Activated CD8-positive, alpha-beta memory T cell treated with anti-CD3 and anti-CD28 coated beads, Interleukin-2, amount 10 ng/mL, durations not matched to agents 7 days and 5 days (primary cell): ENCODE measurements at regions of chr1 and their contacts with region 1.

Region 1: GRCh38 chr1:181424786-181425403 is 58.4 kb upstream of the CACNA1E start:
- DNase-seq: peak; percentile 80
- ATAC-seq: peak; percentile 68
- H3K4me3 Mint-ChIP-seq: peak overlapping the region; percentile 44
- H3K27ac Mint-ChIP-seq: no peak overlapping the region
- H3K4me1 Mint-ChIP-seq: peaks cover 2% of the 10 kb centered on the region
- H3K27me3 Mint-ChIP-seq: peaks cover 14% of the 10 kb centered on the region

Region 2: GRCh38 chr1:181189691-181190363 is 235.1 kb before region 1 on chr1:
- CTCF ChIA-PET with region 1: interaction called, 102 read pairs
- DNase-seq: peak; percentile 76
- ATAC-seq: peak; percentile 91
- H3K4me3 Mint-ChIP-seq: no peak overlapping the region
- H3K27ac Mint-ChIP-seq: no peak overlapping the region
- H3K4me1 Mint-ChIP-seq: no peaks in the 10 kb centered on the region
- H3K27me3 Mint-ChIP-seq: peaks cover 9% of the 10 kb centered on the region

Region 3: DNA sequence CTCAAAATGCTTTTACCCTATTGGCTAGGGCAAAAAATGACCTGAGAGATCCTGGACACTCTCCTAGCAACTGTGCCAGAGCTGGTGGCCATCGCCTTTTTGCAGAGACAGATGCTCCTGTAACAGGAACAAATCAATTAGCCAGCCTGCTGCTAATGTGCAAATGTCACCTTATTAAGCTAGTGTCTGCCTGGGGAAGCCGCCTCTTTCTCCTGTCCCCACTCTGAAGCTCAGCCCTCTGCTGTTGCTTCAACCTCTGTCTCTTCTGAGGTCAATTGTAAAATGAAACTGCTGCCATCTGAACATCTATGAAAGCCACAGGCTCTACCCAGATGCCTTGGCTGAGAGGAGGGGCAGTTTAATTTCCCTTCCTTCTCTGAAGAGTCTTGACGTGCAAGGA is 27.1 kb before region 1 on chr1:
- CTCF ChIA-PET with region 1: interaction called, 46 read pairs
- DNase-seq: peak; percentile 64
- ATAC-seq: peak; percentile 76
- H3K4me3 Mint-ChIP-seq: peak overlapping the region; percentile 30
- H3K27ac Mint-ChIP-seq: peak overlapping the region; percentile 82
- H3K4me1 Mint-ChIP-seq: peaks cover 41% of the 10 kb centered on the region
- H3K27me3 Mint-ChIP-seq: no peaks in the 10 kb centered on the region

Region 4: DNA sequence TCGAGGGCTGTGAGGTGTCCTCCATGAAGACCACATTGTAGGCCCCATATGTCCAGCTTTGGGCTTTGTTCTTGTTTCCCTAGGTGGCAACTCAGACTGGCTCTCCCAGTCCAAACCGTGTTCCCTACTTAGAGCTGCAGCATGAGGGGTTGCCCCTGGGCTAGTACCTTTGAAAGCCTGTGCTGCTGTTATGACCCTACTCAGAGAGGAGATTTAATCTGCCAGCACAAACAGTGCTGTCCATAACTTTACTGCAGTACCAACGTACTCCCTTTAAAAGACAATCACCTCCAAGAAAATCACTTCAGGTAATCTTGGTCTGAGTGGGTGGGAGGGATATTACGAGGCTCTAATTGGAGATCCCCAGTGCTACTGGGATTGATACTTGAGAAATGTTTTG is 20.0 kb before region 1 on chr1:
- CTCF ChIA-PET with region 1: interaction called, 46 read pairs
- DNase-seq: no peak
- ATAC-seq: no peak
- H3K4me3 Mint-ChIP-seq: no peak overlapping the region
- H3K27ac Mint-ChIP-seq: no peak overlapping the region
- H3K4me1 Mint-ChIP-seq: peaks cover 14% of the 10 kb centered on the region
- H3K27me3 Mint-ChIP-seq: no peaks in the 10 kb centered on the region

Region 5: GRCh38 chr1:181514298-181515290 is 89.7 kb after region 1 on chr1:
- CTCF ChIA-PET with region 1: no interaction called
- DNase-seq: no peak
- ATAC-seq: peak; percentile 30
- H3K4me3 Mint-ChIP-seq: no peak overlapping the region
- H3K27ac Mint-ChIP-seq: no peak overlapping the region
- H3K4me1 Mint-ChIP-seq: peaks cover 4% of the 10 kb centered on the region
- H3K27me3 Mint-ChIP-seq: peaks cover 15% of the 10 kb centered on the region